K562 (cell line): ENCODE measurements at regions of chr2 and their contacts with region 1.

Region 1: GRCh38 chr2:157751462-157752058 is 122.9 kb upstream of the ACVR1C start:
- DNase-seq: peak; percentile 26 to 88 (median 42)
- ATAC-seq: peak; percentile 98
- H3K4me3 ChIP-seq: no peak overlapping the region
- H3K27ac ChIP-seq: peak overlapping the region; percentile 80
- H3K4me1 ChIP-seq: peaks cover 13 to 16% of the 10 kb centered on the region in 2 experiments; a peak in 4 of 5 replicates
- H3K27me3 ChIP-seq: no peaks in the 10 kb centered on the region
- CTCF ChIP-seq: peak; percentile 71 to 79 (median 73)
- EP300 ChIP-seq: peak; percentile 23; the same call in 1 of the 2 replicates
- POLR2A ChIP-seq: no peak
- RAD21 ChIP-seq: peak; percentile 37 to 67; a peak in 3 of 4 replicates

Region 2: DNA sequence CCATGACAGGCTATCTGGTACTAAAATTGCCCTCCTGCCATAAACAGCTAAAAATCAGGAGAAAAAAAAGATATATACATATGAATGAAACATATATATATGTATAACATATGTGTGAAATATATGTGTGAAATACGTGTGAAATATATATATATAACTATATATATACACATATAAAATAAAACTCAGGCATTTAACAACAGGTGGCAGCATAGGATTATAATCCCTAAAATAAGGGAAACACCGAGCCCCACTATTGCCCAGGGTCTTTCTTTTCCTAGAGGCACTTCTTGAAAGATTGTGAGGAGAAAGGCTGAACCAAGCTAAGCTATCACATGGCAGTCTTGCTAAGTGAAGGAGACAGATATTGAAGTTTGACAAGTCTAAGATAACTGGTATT is 241.8 kb before region 1 on chr2:
- CTCF ChIA-PET with region 1: interaction called, 3 read pairs
- POLR2A ChIA-PET with region 1: no interaction called
- in situ Hi-C with region 1: loop called (anchors 10 kb)
- intact Hi-C with region 1: no loop called
- DNase-seq: peak in 1 of 4 experiments; percentile 7
- ATAC-seq: peak; percentile 39; the same call in 1 of the 3 replicates
- H3K4me3 ChIP-seq: no peak overlapping the region
- H3K27ac ChIP-seq: no peak overlapping the region
- H3K4me1 ChIP-seq: no peaks in the 10 kb centered on the region
- H3K27me3 ChIP-seq: no peaks in the 10 kb centered on the region
- CTCF ChIP-seq: peak; percentile 8 to 33 (median 10); a peak in 2 of 6 replicates
- EP300 ChIP-seq: no peak
- POLR2A ChIP-seq: no peak
- RAD21 ChIP-seq: peak in 1 of 2 experiments; percentile 41; a peak in 2 of 4 replicates

Region 3: DNA sequence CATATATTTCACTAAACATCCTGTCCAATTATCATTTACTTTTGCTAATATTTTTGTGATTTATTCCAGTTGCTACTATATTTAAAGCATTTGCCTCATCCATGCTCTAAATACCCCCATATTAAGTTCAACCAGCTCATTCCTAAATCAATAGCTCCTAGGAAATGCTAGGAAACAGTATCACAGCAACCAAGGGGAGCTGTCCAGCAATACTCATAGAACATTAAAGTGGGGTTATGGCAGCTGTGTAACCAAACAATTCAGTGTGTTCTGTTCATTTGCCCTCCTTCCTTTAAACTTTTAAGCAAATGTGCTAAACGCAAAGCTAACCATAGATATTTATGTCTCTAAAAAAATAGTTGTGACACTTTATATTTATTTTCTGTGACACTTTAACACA is 164.0 kb before region 1 on chr2:
- CTCF ChIA-PET with region 1: no interaction called
- POLR2A ChIA-PET with region 1: no interaction called
- in situ Hi-C with region 1: no loop called
- intact Hi-C with region 1: no loop called
- DNase-seq: no peak
- ATAC-seq: no peak
- H3K4me3 ChIP-seq: no peak overlapping the region
- H3K27ac ChIP-seq: no peak overlapping the region
- H3K4me1 ChIP-seq: no peaks in the 10 kb centered on the region
- H3K27me3 ChIP-seq: no peaks in the 10 kb centered on the region
- CTCF ChIP-seq: no peak
- EP300 ChIP-seq: no peak
- POLR2A ChIP-seq: no peak
- RAD21 ChIP-seq: no peak

Region 4: GRCh38 chr2:157628477-157629415 is 122.8 kb before region 1 on chr2 and contains the start of gene ACVR1C:
- CTCF ChIA-PET with region 1: no interaction called
- POLR2A ChIA-PET with region 1: no interaction called
- in situ Hi-C with region 1: no loop called
- intact Hi-C with region 1: loop called (anchors 5 kb)
- DNase-seq: peak; percentile 64 to 69 (median 66)
- ATAC-seq: peak; percentile 95
- H3K4me3 ChIP-seq: peak within 1 kb of the TSS; percentile 48
- H3K27ac ChIP-seq: no peak within 1 kb of the TSS
- H3K4me1 ChIP-seq: peaks cover 0 to 13% of the 10 kb centered on the region in 2 experiments; a peak in 2 of 5 replicates
- H3K27me3 ChIP-seq: peaks cover 13 to 16% of the 10 kb centered on the region in 2 experiments
- CTCF ChIP-seq: peak; percentile 61 to 86 (median 62)
- EP300 ChIP-seq: no peak
- POLR2A ChIP-seq: no peak
- RAD21 ChIP-seq: peak in 1 of 2 experiments; percentile 34; a peak in 1 of 4 replicates
- polyA plus RNA-seq, gene ACVR1C: 0.21 to 0.32 TPM

Region 5: DNA sequence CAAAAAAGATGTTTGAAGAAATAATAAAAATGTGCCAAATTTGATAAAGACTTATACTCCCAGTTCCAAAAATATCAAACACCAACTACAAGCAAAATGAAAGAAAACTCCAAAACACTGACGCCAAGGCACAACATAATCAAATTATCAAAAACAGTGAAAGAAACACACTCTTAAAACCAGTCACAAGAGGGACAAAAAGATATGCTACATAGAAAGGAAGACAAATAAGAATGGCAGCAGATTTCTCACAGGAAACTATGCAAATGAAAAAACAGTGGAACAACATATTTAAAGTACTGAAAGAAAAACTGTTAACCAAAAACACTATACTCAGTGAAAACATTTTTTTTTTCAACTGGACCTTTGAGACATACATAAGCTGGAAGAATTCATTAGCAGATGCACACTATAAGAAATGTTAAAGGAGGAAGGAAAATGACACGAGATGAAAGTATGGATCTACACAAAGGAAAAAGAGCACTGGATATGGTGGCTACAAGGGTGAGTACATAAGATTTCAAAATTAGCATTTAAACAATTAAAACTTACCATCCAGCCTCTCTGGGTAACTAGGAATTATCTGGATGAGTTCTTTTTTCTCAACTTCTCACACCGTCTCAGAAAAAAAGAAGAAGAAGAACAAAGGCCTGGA is 28.9 kb before region 1 on chr2:
- CTCF ChIA-PET with region 1: no interaction called
- POLR2A ChIA-PET with region 1: no interaction called
- in situ Hi-C with region 1: no loop called
- intact Hi-C with region 1: no loop called
- DNase-seq: peak in 2 of 4 experiments; percentile 11 to 14
- ATAC-seq: no peak
- H3K4me3 ChIP-seq: no peak overlapping the region
- H3K27ac ChIP-seq: no peak overlapping the region
- H3K4me1 ChIP-seq: no peaks in the 10 kb centered on the region
- H3K27me3 ChIP-seq: no peaks in the 10 kb centered on the region
- CTCF ChIP-seq: no peak
- EP300 ChIP-seq: no peak
- POLR2A ChIP-seq: no peak
- RAD21 ChIP-seq: 0 out of 4 replicates have a peak, but pooled peaks of 1 of the 2 experiments have one; percentile 20